ENCODE measurements at regions of chr6 and their contacts with region 1.

Region 1: GRCh38 chr6:158518191-158519127 is 41.4 kb upstream of the TMEM181 start:
- DNase-seq: peak; percentile 42
- H3K4me3 ChIP-seq: peak overlapping the region; percentile 32
- H3K27me3 ChIP-seq: no peaks in the 10 kb centered on the region
- CTCF ChIP-seq: peak; percentile 79

Region 2: DNA sequence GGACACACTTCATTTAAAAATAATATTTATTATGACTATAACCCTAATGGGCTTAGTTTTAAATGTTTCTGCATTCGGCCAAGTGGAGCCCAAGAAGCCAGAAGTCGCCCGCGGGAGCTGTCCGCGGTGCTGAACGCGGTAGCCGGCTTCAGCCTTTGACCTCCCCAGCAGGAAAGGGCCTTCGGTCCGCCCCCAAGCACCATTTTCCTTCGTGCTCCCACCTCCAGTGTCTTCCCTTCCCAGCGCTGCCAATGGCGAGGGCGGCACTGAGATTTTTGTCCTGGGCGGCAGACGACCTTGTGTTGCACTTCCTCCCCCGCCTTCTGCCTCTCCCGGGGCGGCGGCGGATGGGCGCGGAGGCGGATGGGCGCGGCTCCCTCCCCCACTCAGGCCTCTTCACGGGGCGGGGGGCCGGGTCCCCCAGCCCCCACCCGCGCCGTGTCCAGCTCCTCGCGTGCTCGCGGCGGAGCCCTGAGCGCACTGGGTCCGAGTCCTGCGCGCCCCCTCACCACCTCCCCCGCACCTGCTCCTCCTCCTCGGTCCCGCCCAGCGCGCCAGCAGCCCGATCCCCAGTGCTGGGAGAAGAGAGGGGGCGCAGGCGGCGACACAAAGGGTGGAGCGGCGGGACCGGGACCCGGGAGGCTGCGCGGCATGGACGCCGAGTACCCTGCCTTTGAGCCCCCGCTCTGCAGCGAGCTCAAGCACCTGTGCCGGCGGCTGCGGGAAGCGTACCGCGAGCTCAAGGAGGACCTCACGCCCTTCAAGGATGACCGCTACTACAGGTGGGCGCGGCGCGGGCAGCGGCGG is 17.8 kb after region 1 on chr6:
- CTCF ChIA-PET with region 1: interaction called, 11 read pairs
- POLR2A ChIA-PET with region 1: no interaction called
- DNase-seq: no peak
- H3K4me3 ChIP-seq: peak overlapping the region; percentile 58
- H3K27me3 ChIP-seq: peaks cover 7% of the 10 kb centered on the region
- CTCF ChIP-seq: no peak

Region 3: GRCh38 chr6:158715964-158716311 is 197.5 kb after region 1 on chr6:
- CTCF ChIA-PET with region 1: no interaction called
- POLR2A ChIA-PET with region 1: no interaction called
- DNase-seq: no peak
- H3K4me3 ChIP-seq: no peak overlapping the region
- H3K27me3 ChIP-seq: no peaks in the 10 kb centered on the region
- CTCF ChIP-seq: no peak